Posterior vena cava (tissue), 2 donors: ENCODE measurements at regions of chr1 and their contacts with region 1.

Region 1: DNA sequence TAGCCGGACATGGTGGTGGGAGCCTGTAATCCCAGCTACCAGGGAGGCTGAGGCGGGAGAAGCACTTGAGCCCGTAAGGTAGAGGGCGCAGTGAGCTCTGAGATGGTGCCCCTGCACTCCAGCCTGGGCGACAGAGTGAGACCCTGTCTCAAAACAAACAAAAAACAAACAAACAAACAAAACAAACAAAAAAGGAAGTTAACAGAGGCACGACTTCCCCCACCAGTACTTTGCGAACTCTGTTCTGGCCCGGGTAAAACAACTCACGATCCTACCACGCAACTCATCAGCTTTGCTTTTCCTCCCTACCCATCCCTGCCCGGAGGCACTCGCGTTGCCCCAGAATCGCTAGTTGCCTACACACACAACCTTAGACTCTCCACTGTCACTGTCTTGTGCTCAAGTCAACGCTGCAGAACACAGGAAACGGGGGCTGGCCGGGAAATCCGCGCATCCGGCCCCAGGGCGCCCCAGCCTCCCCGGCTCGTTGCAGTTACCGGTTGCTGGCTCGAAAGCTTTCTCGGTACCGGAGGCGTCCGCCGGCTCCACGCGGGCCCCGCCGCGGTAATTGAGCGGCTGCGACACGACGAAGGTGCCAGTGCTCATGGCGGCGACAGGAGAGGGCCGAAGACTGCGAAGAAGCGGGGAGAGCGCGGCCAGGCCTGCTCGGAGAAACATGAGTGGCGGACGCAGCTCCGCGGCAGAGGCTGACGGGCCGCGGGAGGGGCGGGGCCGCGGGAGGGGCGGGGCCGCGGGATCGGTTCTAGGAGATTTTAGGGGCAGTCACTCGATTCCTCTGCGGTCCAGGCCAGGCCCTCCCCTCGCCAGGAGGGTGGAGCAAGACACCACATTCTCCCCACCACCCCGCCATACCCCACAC is at the start of gene ALDH9A1:
- DNase-seq: peak; percentile 96
- total RNA-seq, gene ALDH9A1: 42.6 to 52.3 TPM

Region 2: DNA sequence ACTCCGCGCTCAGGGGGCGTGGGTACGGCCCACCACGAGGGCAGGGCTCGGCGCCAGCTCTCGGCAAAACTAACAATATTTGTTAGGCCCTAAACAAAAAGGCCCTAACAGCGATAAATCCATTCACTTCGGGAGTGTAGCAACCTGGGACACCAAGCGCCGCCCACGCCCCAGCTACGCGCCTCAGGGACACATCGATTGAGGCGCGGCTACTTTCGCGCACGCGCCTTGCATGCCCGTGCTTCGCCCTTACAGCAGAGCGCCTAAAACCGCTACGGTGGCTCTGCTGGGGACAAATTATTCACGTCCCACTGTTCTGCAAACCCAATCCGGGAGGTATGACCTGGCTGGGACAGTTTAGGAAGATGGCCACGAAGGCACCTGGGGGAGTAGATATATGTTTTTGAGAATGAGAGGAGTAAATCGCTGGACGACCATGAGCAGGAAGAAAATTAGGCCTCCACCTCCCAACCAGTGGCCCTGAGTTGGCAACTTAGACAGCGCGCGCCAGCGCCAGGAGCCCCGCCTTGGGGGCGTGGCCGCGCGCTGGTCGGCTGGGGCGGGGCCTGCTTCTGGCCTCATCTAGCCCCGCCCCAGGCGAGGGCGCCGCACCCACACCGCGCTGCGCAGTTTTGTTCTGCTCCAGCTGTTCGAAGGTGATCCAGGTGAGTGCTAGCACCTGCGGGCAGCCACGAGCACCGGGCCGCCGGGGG is 67.3 kb before region 1 on chr1 and contains the start of gene MGST3:
- intact Hi-C with region 1: loop called in 1 of 2 experiments (anchors 10 kb)
- DNase-seq: peak; percentile 98
- total RNA-seq, gene MGST3: 193 to 230 TPM